ENCODE measurements at regions of chrX and their contacts with region 1.

Region 1: GRCh38 chrX:68828740-68829552 is at the start of gene EFNB1:
- DNase-seq: peak; percentile 87
- H3K4me3 ChIP-seq: peak within 1 kb of the TSS; percentile 61 to 62
- H3K27ac ChIP-seq: peak within 1 kb of the TSS in 1 of 2 experiments; percentile 58; a peak in 1 of 4 replicates
- H3K4me1 ChIP-seq: peaks cover 0 to 9% of the 10 kb centered on the region in 2 experiments; a peak in 1 of 4 replicates
- H3K27me3 ChIP-seq: peaks cover 15% of the 10 kb centered on the region; the same call in 1 of the 2 replicates
- CTCF ChIP-seq: no peak
- EP300 ChIP-seq: no peak
- RAD21 ChIP-seq: peak; percentile 3; the same call in 1 of the 2 replicates
- polyA plus RNA-seq, gene EFNB1: 7.5 and 8.4 TPM in 2 replicates

Region 2: DNA sequence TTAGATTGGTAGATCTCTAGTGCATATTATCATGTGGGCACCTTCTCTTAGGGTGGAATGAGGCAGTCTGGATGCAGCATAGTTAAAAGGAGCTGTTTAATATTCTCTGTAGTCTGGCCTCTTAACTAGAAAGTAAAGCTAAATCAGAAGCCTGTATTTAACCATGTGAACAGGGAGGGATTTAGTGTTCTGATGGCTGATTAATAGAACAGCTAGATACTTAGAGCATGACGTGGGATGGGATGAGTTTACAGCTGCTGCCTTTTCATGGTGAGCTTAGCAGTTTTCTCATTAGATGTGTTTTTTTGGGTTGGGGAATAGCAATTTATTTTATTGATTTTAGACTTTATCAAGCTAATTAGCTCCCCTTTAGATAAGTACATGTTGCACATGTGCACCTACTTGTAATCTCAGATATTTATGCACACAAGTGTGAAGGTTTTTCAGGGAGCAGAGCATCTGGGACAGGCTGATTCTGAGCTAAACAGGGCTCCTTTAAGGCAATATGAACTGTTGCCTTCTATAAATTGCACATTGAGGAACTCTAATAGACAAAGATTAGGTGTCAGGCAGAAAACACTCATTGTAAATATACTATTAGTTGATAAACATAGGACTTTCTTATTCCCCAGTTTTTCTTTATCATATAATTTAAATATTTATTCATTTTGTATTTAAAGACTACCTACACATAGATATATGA is 296.0 kb before region 1 on chrX:
- CTCF ChIA-PET with region 1: no interaction called
- POLR2A ChIA-PET with region 1: no interaction called
- DNase-seq: no peak
- H3K4me3 ChIP-seq: no peak overlapping the region
- H3K27ac ChIP-seq: no peak overlapping the region
- H3K4me1 ChIP-seq: no peaks in the 10 kb centered on the region
- H3K27me3 ChIP-seq: no peaks in the 10 kb centered on the region
- CTCF ChIP-seq: no peak
- EP300 ChIP-seq: no peak
- RAD21 ChIP-seq: no peak

Region 3: GRCh38 chrX:68894513-68895340 is 65.8 kb after region 1 on chrX:
- CTCF ChIA-PET with region 1: interaction called, 20 read pairs
- POLR2A ChIA-PET with region 1: interaction called, 21 read pairs
- DNase-seq: peak; percentile 73
- H3K4me3 ChIP-seq: no peak overlapping the region
- H3K27ac ChIP-seq: peak overlapping the region; percentile 24 to 92; a peak in 3 of 4 replicates
- H3K4me1 ChIP-seq: peaks cover 9 to 39% of the 10 kb centered on the region in 2 experiments; a peak in 2 of 4 replicates
- H3K27me3 ChIP-seq: peaks cover 21% of the 10 kb centered on the region
- CTCF ChIP-seq: no peak
- EP300 ChIP-seq: no peak
- RAD21 ChIP-seq: no peak; the same call in 1 of the 2 replicates

Region 4: GRCh38 chrX:69027181-69028005 is 198.4 kb after region 1 on chrX:
- CTCF ChIA-PET with region 1: interaction called, 10 read pairs
- POLR2A ChIA-PET with region 1: interaction called, 3 read pairs
- DNase-seq: no peak
- H3K4me3 ChIP-seq: no peak overlapping the region
- H3K27ac ChIP-seq: no peak overlapping the region
- H3K4me1 ChIP-seq: peaks cover 0 to 5% of the 10 kb centered on the region in 2 experiments; a peak in 1 of 4 replicates
- H3K27me3 ChIP-seq: no peaks in the 10 kb centered on the region; the same call in 1 of the 2 replicates
- CTCF ChIP-seq: no peak
- EP300 ChIP-seq: no peak
- RAD21 ChIP-seq: no peak

Region 5: GRCh38 chrX:69082393-69083150 is 253.6 kb after region 1 on chrX:
- CTCF ChIA-PET with region 1: interaction called, 36 read pairs
- POLR2A ChIA-PET with region 1: no interaction called
- DNase-seq: no peak
- H3K4me3 ChIP-seq: no peak overlapping the region
- H3K27ac ChIP-seq: no peak overlapping the region
- H3K4me1 ChIP-seq: peaks cover 0 to 21% of the 10 kb centered on the region in 2 experiments; a peak in 1 of 4 replicates
- H3K27me3 ChIP-seq: peaks cover 16% of the 10 kb centered on the region; the same call in 1 of the 2 replicates
- CTCF ChIP-seq: no peak
- EP300 ChIP-seq: no peak
- RAD21 ChIP-seq: no peak

Region 6: DNA sequence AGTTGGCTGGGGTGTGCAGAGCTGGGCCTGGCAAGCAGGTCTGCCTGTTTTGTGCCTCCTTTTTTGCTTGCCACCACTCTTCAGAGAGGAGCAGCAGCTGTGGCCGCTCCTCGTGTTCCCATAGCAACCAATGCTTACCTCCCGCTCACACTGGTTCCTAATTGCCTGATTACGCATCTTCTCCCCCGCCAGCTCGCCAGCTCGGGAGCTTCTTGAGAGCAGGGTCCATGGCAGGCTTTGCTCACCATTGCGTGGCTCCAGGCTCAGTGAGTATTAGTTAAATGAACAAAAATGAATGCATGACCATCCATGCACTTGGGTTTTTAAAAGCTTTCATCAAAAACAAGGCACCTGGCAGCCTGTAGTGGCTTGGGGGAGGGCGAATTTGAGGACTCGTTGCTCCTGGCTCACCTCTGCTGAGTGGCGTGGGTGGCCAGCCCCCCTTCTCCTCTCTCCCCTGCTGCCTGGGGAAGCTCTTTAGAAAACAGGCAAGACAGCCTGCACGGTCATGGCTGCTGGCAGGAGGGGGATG is 350.5 kb after region 1 on chrX:
- CTCF ChIA-PET with region 1: no interaction called
- POLR2A ChIA-PET with region 1: no interaction called
- DNase-seq: peak; percentile 72
- H3K4me3 ChIP-seq: no peak overlapping the region
- H3K27ac ChIP-seq: no peak overlapping the region; a peak in 1 of 4 replicates
- H3K4me1 ChIP-seq: peaks cover 0 to 11% of the 10 kb centered on the region in 2 experiments; a peak in 1 of 4 replicates
- H3K27me3 ChIP-seq: peaks cover 27% of the 10 kb centered on the region
- CTCF ChIP-seq: no peak
- EP300 ChIP-seq: no peak
- RAD21 ChIP-seq: no peak

Region 7: DNA sequence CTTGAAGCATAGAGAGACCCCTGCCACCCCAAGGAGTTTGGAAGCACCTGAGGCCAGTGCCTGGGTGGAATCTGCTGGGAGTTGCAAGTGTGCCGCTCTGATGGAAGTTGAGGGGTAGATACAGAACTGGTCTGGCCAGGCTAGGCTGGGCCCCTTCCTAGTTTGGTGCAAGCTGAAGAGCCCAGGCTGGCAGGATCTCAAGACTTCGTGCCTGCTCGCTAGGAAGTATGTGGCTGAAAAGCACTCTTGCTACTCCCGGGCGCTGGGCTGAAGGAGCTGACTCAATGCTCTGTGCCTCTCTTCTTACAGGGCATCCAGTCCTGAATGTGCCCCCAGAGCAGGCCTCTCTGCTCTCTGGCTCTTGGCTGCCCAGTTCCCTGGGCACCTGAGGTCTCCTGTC is 388.0 kb after region 1 on chrX:
- CTCF ChIA-PET with region 1: interaction called, 95 read pairs
- POLR2A ChIA-PET with region 1: interaction called, 26 read pairs
- DNase-seq: no peak
- H3K4me3 ChIP-seq: no peak overlapping the region
- H3K27ac ChIP-seq: no peak overlapping the region
- H3K4me1 ChIP-seq: peaks cover 0 to 9% of the 10 kb centered on the region in 2 experiments; a peak in 1 of 4 replicates
- H3K27me3 ChIP-seq: peaks cover 19% of the 10 kb centered on the region
- CTCF ChIP-seq: no peak
- EP300 ChIP-seq: no peak
- RAD21 ChIP-seq: no peak

Region 8: GRCh38 chrX:69285881-69286564 is 457.1 kb after region 1 on chrX:
- CTCF ChIA-PET with region 1: interaction called, 30 read pairs
- POLR2A ChIA-PET with region 1: no interaction called
- DNase-seq: peak; percentile 87
- H3K4me3 ChIP-seq: peak overlapping the region; percentile 41 to 56
- H3K27ac ChIP-seq: no peak overlapping the region
- H3K4me1 ChIP-seq: peaks cover 0 to 6% of the 10 kb centered on the region in 2 experiments; a peak in 2 of 4 replicates
- H3K27me3 ChIP-seq: peaks cover 10% of the 10 kb centered on the region; the same call in 1 of the 2 replicates
- CTCF ChIP-seq: peak; percentile 90
- EP300 ChIP-seq: no peak
- RAD21 ChIP-seq: peak; percentile 80

Measured in SK-N-SH (cell line).